Naive thymus-derived CD4-positive, alpha-beta T cell (primary cell): ENCODE measurements at regions of chr5 and their contacts with region 1.

Region 1: GRCh38 chr5:14664302-14665100 is at the start of gene OTULIN:
- DNase-seq: peak; percentile 73 to 92 (median 75)
- ATAC-seq: peak; percentile 85
- H3K4me3 ChIP-seq: peak within 1 kb of the TSS; percentile 86
- H3K4me3 Mint-ChIP-seq: peak within 1 kb of the TSS; percentile 87 to 97 (median 96)
- H3K27ac ChIP-seq: peak within 1 kb of the TSS; percentile 79
- H3K27ac Mint-ChIP-seq: peak within 1 kb of the TSS; percentile 89 to 98 (median 96)
- H3K4me1 ChIP-seq: peaks cover 25 to 38% of the 10 kb centered on the region in 2 donors
- H3K4me1 Mint-ChIP-seq: peaks cover 30 to 73% (median 67%) of the 10 kb centered on the region in 7 donors
- H3K27me3 ChIP-seq: no peaks in the 10 kb centered on the region
- H3K27me3 Mint-ChIP-seq: no peaks in the 10 kb centered on the region
- total RNA-seq, gene OTULIN: 48.3 to 66.9 (median 58.2) TPM

Region 2: GRCh38 chr5:14142827-14143548 is 521.5 kb before region 1 on chr5 and contains the start of gene TRIO:
- CTCF ChIA-PET with region 1: no interaction called
- POLR2A ChIA-PET with region 1: no interaction called
- intact Hi-C with region 1: loop called (anchors 5 to 10 kb)
- DNase-seq: peak; percentile 59 to 87 (median 70)
- ATAC-seq: peak; percentile 76
- H3K4me3 ChIP-seq: peak within 1 kb of the TSS; percentile 65
- H3K4me3 Mint-ChIP-seq: peak within 1 kb of the TSS; percentile 78 to 91 (median 86)
- H3K27ac ChIP-seq: peak within 1 kb of the TSS; percentile 46
- H3K27ac Mint-ChIP-seq: peak within 1 kb of the TSS in 5 of 9 donors; percentile 20 to 80 (median 38)
- H3K4me1 ChIP-seq: peaks cover 6% of the 10 kb centered on the region in 2 donors
- H3K4me1 Mint-ChIP-seq: peaks cover 5 to 18% (median 14%) of the 10 kb centered on the region in 7 donors
- H3K27me3 ChIP-seq: peaks cover 3% of the 10 kb centered on the region in 2 donors
- H3K27me3 Mint-ChIP-seq: peaks cover 15 to 63% (median 35%) of the 10 kb centered on the region in 5 donors
- total RNA-seq, gene TRIO: 5.5 to 45.9 (median 8.5) TPM

Region 3: DNA sequence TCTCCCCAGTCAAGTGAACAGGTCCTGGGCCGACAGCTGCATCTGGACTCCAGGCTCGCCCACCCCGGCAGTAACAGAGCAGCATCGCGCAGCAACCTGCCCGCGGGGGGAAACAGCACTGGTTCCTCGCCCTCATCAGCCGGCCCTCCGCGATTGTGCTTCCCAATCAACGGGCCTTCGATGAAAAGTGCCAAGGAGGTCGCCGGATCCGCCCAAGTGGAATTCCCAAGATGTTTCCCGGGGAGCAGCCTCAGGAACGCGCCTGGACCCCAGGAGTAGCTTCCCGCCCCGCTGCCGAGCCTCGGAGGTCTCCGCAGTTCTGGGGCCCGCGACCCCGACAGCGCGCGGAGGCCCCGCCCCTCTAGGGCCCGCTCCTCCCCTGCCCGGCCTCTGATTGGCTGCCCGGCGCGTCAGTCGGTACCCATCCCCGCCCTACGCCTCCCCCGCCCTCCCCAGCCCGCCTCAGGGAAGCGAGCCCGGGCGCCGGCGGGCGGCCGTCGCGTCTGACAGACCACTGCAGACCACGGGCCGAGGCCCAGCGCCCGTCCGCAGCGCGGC is 83.1 kb before region 1 on chr5 and contains the start of gene OTULINL:
- CTCF ChIA-PET with region 1: no interaction called
- POLR2A ChIA-PET with region 1: no interaction called
- intact Hi-C with region 1: loop called (anchors 1 kb)
- DNase-seq: peak; percentile 72 to 90 (median 86)
- ATAC-seq: peak; percentile 92
- H3K4me3 ChIP-seq: peak within 1 kb of the TSS; percentile 82
- H3K4me3 Mint-ChIP-seq: peak within 1 kb of the TSS; percentile 83 to 91 (median 88)
- H3K27ac ChIP-seq: peak within 1 kb of the TSS; percentile 75
- H3K27ac Mint-ChIP-seq: peak within 1 kb of the TSS; percentile 78 to 96 (median 89)
- H3K4me1 ChIP-seq: peaks cover 24 to 27% of the 10 kb centered on the region in 2 donors
- H3K4me1 Mint-ChIP-seq: peaks cover 30 to 51% (median 44%) of the 10 kb centered on the region in 7 donors
- H3K27me3 ChIP-seq: no peaks in the 10 kb centered on the region
- H3K27me3 Mint-ChIP-seq: peaks cover 0 to 27% (median 0%) of the 10 kb centered on the region in 5 donors
- total RNA-seq, gene OTULINL: 26.1 to 44.7 (median 32.4) TPM

Region 4: GRCh38 chr5:14685757-14686156 is 21.3 kb after region 1 on chr5:
- CTCF ChIA-PET with region 1: interaction called, 10 read pairs
- POLR2A ChIA-PET with region 1: interaction called, 4 read pairs
- intact Hi-C with region 1: loop called (anchors 2 kb)
- DNase-seq: peak in 8 of 9 donors; percentile 41 to 70 (median 62)
- ATAC-seq: peak; percentile 87
- H3K4me3 ChIP-seq: peak overlapping the region; percentile 26
- H3K4me3 Mint-ChIP-seq: peak overlapping the region; percentile 49 to 85 (median 72)
- H3K27ac ChIP-seq: no peak overlapping the region
- H3K27ac Mint-ChIP-seq: peak overlapping the region; percentile 41 to 97 (median 77)
- H3K4me1 ChIP-seq: peaks cover 4% of the 10 kb centered on the region in 2 donors
- H3K4me1 Mint-ChIP-seq: peaks cover 4 to 20% (median 14%) of the 10 kb centered on the region in 7 donors
- H3K27me3 ChIP-seq: no peaks in the 10 kb centered on the region
- H3K27me3 Mint-ChIP-seq: no peaks in the 10 kb centered on the region

Region 5: GRCh38 chr5:14996997-14997396 is 332.5 kb after region 1 on chr5:
- CTCF ChIA-PET with region 1: no interaction called
- POLR2A ChIA-PET with region 1: no interaction called
- intact Hi-C with region 1: loop called (anchors 1 to 5 kb)
- DNase-seq: no peak
- ATAC-seq: peak; percentile 29
- H3K4me3 ChIP-seq: no peak overlapping the region
- H3K4me3 Mint-ChIP-seq: no peak overlapping the region
- H3K27ac ChIP-seq: no peak overlapping the region
- H3K27ac Mint-ChIP-seq: no peak overlapping the region
- H3K4me1 ChIP-seq: peaks cover 5% of the 10 kb centered on the region in 2 donors
- H3K4me1 Mint-ChIP-seq: peaks cover 6 to 33% (median 12%) of the 10 kb centered on the region in 7 donors
- H3K27me3 ChIP-seq: no peaks in the 10 kb centered on the region
- H3K27me3 Mint-ChIP-seq: peaks cover 0 to 18% (median 0%) of the 10 kb centered on the region in 5 donors

Region 6: GRCh38 chr5:16616536-16617273 is 1952.2 kb after region 1 on chr5 and contains the start of gene RETREG1:
- CTCF ChIA-PET with region 1: no interaction called
- POLR2A ChIA-PET with region 1: no interaction called
- intact Hi-C with region 1: loop called in 1 of 2 experiments (anchors 10 kb)
- DNase-seq: peak; percentile 84 to 92 (median 91)
- ATAC-seq: peak; percentile 93
- H3K4me3 ChIP-seq: peak within 1 kb of the TSS; percentile 79
- H3K4me3 Mint-ChIP-seq: peak within 1 kb of the TSS in 6 of 10 donors; percentile 96 to 99 (median 98)
- H3K27ac ChIP-seq: peak within 1 kb of the TSS; percentile 98
- H3K27ac Mint-ChIP-seq: peak within 1 kb of the TSS in 7 of 9 donors; percentile 92 to 99 (median 99)
- H3K4me1 ChIP-seq: peaks cover 10 to 32% of the 10 kb centered on the region in 2 donors
- H3K4me1 Mint-ChIP-seq: peaks cover 32 to 52% (median 44%) of the 10 kb centered on the region in 7 donors
- H3K27me3 ChIP-seq: no peaks in the 10 kb centered on the region
- H3K27me3 Mint-ChIP-seq: no peaks in the 10 kb centered on the region
- total RNA-seq, gene RETREG1: 37.4 to 78.3 (median 47.4) TPM